A549 (cell line): ENCODE measurements at regions of chr9 and their contacts with region 1.

Region 1: DNA sequence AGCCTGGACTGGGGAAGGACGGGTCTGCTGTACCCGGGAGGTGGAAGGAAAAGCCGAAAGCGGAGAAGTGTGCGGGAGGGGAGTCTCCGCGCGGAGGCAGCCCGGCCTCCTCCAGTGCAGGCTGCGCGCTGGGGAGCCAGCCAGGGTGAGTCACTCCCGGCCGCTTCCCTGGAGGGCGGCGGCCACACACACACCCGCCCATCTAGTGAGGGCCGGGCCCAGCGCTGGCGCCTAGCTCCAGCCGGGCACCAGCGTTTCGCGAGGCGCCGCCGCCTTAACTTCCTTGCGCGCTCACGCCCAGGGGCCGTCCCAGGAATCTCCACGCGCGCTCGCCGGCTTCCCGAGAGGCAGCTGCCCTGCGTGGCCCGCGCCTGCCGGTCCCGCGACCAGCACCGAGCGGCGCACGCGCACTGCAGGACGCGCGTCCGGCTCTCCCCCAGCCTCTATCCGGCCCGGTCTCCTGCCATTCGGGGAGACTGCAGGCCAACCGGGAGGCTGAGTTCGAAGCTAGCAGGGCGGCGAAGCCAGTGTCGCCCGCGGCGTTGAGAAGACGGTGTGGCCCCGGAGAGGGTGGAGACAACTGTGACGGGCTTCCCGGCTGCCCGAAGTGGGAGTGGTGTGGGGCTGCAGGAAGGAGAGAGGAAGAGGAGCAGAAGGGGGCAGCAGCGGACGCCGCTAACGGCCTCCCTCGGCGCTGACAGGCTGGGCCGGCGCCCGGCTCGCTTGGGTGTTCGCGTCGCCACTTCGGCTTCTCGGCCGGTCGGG is at the start of gene JAK2:
- DNase-seq: peak; percentile 71 to 95
- ATAC-seq: peak; percentile 93 to 95
- H3K4me3 ChIP-seq: peak within 1 kb of the TSS; percentile 75
- H3K27ac ChIP-seq: peak within 1 kb of the TSS; percentile 94 to 97
- H3K4me1 ChIP-seq: peaks cover 21% of the 10 kb centered on the region
- CTCF ChIP-seq: peak; percentile 50
- EP300 ChIP-seq: no peak; a peak in 1 of 5 replicates
- POLR2A ChIP-seq: peak; percentile 73
- RAD21 ChIP-seq: peak; percentile 30 to 49; a peak in 4 of 5 replicates
- polyA plus RNA-seq, gene JAK2: 6.5 and 7.7 TPM in 2 replicates

Region 2: GRCh38 chr9:4235871-4236804 is 748.7 kb before region 1 on chr9:
- CTCF ChIA-PET with region 1: no interaction called
- POLR2A ChIA-PET with region 1: no interaction called
- DNase-seq: peak; percentile 74 to 89
- ATAC-seq: peak; percentile 82 to 93
- H3K4me3 ChIP-seq: peak overlapping the region; percentile 3; the same call in 1 of the 3 replicates
- H3K27ac ChIP-seq: peak overlapping the region; percentile 83 to 85
- H3K4me1 ChIP-seq: peaks cover 40% of the 10 kb centered on the region
- CTCF ChIP-seq: no peak
- EP300 ChIP-seq: peak; percentile 27 to 40; a peak in 2 of 5 replicates
- POLR2A ChIP-seq: no peak
- RAD21 ChIP-seq: no peak

Region 3: GRCh38 chr9:4657426-4658159 is 327.2 kb before region 1 on chr9:
- CTCF ChIA-PET with region 1: no interaction called
- POLR2A ChIA-PET with region 1: no interaction called
- DNase-seq: peak in 1 of 2 experiments; percentile 22
- ATAC-seq: no peak
- H3K4me3 ChIP-seq: no peak overlapping the region
- H3K27ac ChIP-seq: peak overlapping the region in 1 of 2 experiments; percentile 28; a peak in 1 of 6 replicates
- H3K4me1 ChIP-seq: peaks cover 23% of the 10 kb centered on the region; the same call in 2 of the 3 replicates
- CTCF ChIP-seq: no peak
- EP300 ChIP-seq: no peak
- POLR2A ChIP-seq: no peak
- RAD21 ChIP-seq: no peak

Region 4: DNA sequence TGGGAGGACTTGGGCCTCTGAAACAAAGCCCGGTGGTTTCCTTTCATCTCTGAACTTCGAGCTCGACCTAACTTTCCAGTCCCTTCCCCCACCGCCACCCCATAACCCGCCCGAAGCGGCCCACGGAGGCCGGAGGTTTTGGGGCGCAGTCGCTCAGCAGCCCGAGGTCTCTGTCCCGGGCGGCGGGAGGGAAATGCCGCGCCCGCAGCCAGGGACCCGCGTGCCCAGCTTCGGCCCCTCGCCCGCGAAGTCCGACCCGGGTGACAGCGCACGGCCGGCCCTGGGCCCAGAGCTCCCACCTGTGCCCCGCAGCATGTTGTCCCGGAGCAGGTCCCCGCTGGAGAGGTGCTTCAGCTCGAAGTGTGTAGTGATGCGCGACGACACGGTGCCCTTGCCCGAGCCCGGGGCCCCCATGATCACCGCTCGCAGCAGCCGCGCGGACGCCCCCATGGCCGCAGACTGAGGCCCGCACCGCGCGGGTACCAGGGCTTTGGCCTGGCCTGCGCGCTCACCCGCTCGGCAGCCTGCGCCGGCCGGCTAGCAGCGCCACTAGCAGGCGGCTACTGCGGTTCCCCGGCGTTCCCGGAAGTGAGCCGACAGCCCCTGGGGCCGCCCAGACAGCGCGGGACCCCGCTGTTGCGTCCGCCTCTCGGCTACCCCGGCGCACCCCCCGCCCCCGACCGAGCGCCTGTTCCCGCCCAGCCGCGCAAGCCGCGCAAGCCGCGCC is 244.0 kb before region 1 on chr9 and contains the start of gene AK3:
- CTCF ChIA-PET with region 1: interaction called, 17 read pairs
- POLR2A ChIA-PET with region 1: no interaction called
- DNase-seq: peak; percentile 87 to 89
- ATAC-seq: peak; percentile 92 to 95
- H3K4me3 ChIP-seq: peak within 1 kb of the TSS; percentile 88
- H3K27ac ChIP-seq: peak within 1 kb of the TSS; percentile 88 to 92
- H3K4me1 ChIP-seq: peaks cover 24% of the 10 kb centered on the region
- CTCF ChIP-seq: peak; percentile 29; the same call in 2 of the 3 replicates
- EP300 ChIP-seq: no peak
- POLR2A ChIP-seq: peak; percentile 89
- RAD21 ChIP-seq: peak; percentile 21 to 52; a peak in 3 of 5 replicates
- polyA plus RNA-seq, gene AK3: 70.4 and 83.0 TPM in 2 replicates

Region 5: GRCh38 chr9:4750023-4750673 is 234.7 kb before region 1 on chr9:
- CTCF ChIA-PET with region 1: interaction called, 25 read pairs
- POLR2A ChIA-PET with region 1: no interaction called
- DNase-seq: peak in 1 of 2 experiments; percentile 46
- ATAC-seq: peak; percentile 68 to 83; a peak in 4 of 6 replicates
- H3K4me3 ChIP-seq: no peak overlapping the region
- H3K27ac ChIP-seq: no peak overlapping the region
- H3K4me1 ChIP-seq: no peaks in the 10 kb centered on the region
- CTCF ChIP-seq: peak; percentile 68
- EP300 ChIP-seq: no peak
- POLR2A ChIP-seq: no peak
- RAD21 ChIP-seq: peak; percentile 54 to 58

Region 6: GRCh38 chr9:4792572-4793458 is 192.0 kb before region 1 on chr9 and contains the start of gene RCL1:
- CTCF ChIA-PET with region 1: interaction called, 10 read pairs
- POLR2A ChIA-PET with region 1: interaction called, 4 read pairs
- DNase-seq: peak; percentile 92 to 95
- ATAC-seq: peak; percentile 95 to 99
- H3K4me3 ChIP-seq: peak within 1 kb of the TSS; percentile 97
- H3K27ac ChIP-seq: peak within 1 kb of the TSS; percentile 89 to 93
- H3K4me1 ChIP-seq: peaks cover 5% of the 10 kb centered on the region; the same call in 1 of the 3 replicates
- CTCF ChIP-seq: no peak
- EP300 ChIP-seq: no peak
- POLR2A ChIP-seq: peak; percentile 69
- RAD21 ChIP-seq: no peak
- polyA plus RNA-seq, gene RCL1: 25.5 and 26.7 TPM in 2 replicates

Region 7: GRCh38 chr9:4837261-4838188 is 147.3 kb before region 1 on chr9:
- CTCF ChIA-PET with region 1: interaction called, 11 read pairs
- POLR2A ChIA-PET with region 1: no interaction called
- DNase-seq: no peak
- ATAC-seq: no peak
- H3K4me3 ChIP-seq: no peak overlapping the region
- H3K27ac ChIP-seq: peak overlapping the region in 1 of 2 experiments; percentile 54; a peak in 1 of 6 replicates
- H3K4me1 ChIP-seq: peaks cover 47% of the 10 kb centered on the region
- CTCF ChIP-seq: no peak
- EP300 ChIP-seq: no peak
- POLR2A ChIP-seq: no peak
- RAD21 ChIP-seq: no peak